ENCODE measurements at regions of chr21 and their contacts with region 1.

Region 1: GRCh38 chr21:43866260-43866629 is 1.2 kb downstream of the AGPAT3 start:
- DNase-seq: peak in 5 of 10 donors; percentile 21 to 36 (median 26)
- ATAC-seq: peak; percentile 30
- H3K4me3 Mint-ChIP-seq: peak overlapping the region; percentile 77 to 91 (median 84)
- H3K27ac Mint-ChIP-seq: peak overlapping the region; percentile 79 to 94 (median 90)
- H3K4me1 Mint-ChIP-seq: peaks cover 26 to 49% (median 47%) of the 10 kb centered on the region in 4 donors
- H3K27me3 Mint-ChIP-seq: no peaks in the 10 kb centered on the region

Region 2: GRCh38 chr21:43825681-43826622 is 40.3 kb before region 1 on chr21:
- POLR2A ChIA-PET with region 1: no interaction called
- DNase-seq: no peak
- ATAC-seq: no peak
- H3K4me3 Mint-ChIP-seq: no peak overlapping the region
- H3K27ac Mint-ChIP-seq: peak overlapping the region in 1 of 10 donors; percentile 40
- H3K4me1 Mint-ChIP-seq: no peaks in the 10 kb centered on the region
- H3K27me3 Mint-ChIP-seq: peaks cover 0 to 9% (median 3%) of the 10 kb centered on the region in 5 donors

Region 3: GRCh38 chr21:43893536-43894205 is 27.4 kb after region 1 on chr21:
- POLR2A ChIA-PET with region 1: interaction called, 10 read pairs
- DNase-seq: peak in 3 of 10 donors; percentile 22 to 45 (median 31)
- ATAC-seq: peak; percentile 67 to 68
- H3K4me3 Mint-ChIP-seq: peak overlapping the region; percentile 70 to 87 (median 82)
- H3K27ac Mint-ChIP-seq: peak overlapping the region; percentile 13 to 92 (median 83)
- H3K4me1 Mint-ChIP-seq: peaks cover 27 to 53% (median 37%) of the 10 kb centered on the region in 4 donors
- H3K27me3 Mint-ChIP-seq: no peaks in the 10 kb centered on the region

Region 4: DNA sequence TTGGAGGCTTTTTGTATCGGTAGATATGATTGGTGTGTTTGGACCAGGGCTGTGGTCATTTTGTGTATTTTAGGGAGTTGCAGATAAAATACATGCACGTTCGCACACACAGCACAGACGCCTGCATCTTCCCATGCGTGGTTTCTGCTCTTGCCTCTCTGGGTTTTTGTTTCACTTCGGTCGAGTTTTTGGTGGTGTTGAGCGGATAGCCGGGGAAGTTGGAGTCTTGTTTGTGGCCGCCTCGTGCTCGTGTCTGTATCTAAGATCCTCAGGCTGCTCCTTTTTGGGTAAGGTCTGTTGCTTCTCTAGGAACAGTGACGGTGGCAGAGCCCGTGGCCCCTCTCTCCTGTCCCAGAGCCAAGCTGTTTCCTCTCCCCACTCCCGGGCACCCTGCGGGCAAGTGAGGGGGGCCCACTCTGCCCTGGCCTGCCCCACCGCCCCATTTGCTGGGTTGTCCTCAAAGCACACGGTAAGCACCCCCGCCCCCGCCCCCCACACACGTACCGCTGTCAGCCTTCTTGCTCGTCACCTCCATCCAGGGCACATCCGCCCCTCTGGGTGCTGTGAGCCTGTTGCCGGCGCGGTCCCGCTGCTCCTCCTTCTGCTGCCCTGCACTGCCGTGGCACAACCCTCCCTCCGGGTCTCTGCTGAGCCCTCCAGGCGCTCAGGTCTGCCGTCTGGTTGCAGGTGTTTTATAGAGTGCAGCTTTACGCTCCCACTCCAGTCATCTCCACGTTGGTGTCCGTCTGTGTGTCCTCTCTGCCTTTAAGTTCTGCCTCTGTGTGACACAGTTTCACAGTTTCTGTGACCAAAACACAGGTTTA is 50.7 kb after region 1 on chr21:
- POLR2A ChIA-PET with region 1: interaction called, 13 read pairs
- DNase-seq: peak; percentile 67 to 88 (median 80)
- ATAC-seq: peak; percentile 82 to 85
- H3K4me3 Mint-ChIP-seq: peak overlapping the region; percentile 83 to 97 (median 90)
- H3K27ac Mint-ChIP-seq: peak overlapping the region; percentile 91 to 98 (median 95)
- H3K4me1 Mint-ChIP-seq: peaks cover 41 to 66% (median 65%) of the 10 kb centered on the region in 4 donors
- H3K27me3 Mint-ChIP-seq: no peaks in the 10 kb centered on the region

Region 5: GRCh38 chr21:43921979-43922945 is 56.0 kb after region 1 on chr21:
- POLR2A ChIA-PET with region 1: interaction called, 13 read pairs
- DNase-seq: peak; percentile 55 to 93 (median 82)
- ATAC-seq: peak; percentile 76 to 82
- H3K4me3 Mint-ChIP-seq: peak overlapping the region; percentile 64 to 92 (median 78)
- H3K27ac Mint-ChIP-seq: peak overlapping the region; percentile 91 to 99 (median 97)
- H3K4me1 Mint-ChIP-seq: peaks cover 41 to 75% (median 54%) of the 10 kb centered on the region in 4 donors
- H3K27me3 Mint-ChIP-seq: no peaks in the 10 kb centered on the region

Measured in naive thymus-derived CD8-positive, alpha-beta T cell (primary cell).